AG04450 (cell line): ENCODE measurements at regions of chr19 and their contacts with region 1.

Region 1: DNA sequence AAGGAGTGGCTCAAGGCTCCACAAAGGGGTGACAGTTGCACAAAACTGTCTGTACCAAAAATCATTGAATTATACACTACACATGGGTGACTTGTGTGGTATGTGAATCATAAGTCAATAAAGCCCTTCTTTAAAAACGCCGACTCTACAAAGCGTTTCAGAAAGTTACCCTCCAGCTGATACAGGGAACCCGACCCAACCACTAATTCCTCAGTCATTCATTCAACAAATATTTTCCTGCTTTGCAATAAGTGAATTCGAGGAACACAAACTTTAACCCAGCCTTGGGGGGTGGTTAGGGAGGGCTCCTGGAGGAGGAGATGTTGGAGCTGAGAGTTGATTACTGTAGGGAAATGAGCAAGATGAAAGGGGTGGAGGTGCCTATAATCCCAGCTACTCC is 32.0 kb downstream of the LTBP4 start:
- DNase-seq: peak; percentile 37
- H3K4me3 ChIP-seq: no peak overlapping the region
- H3K27ac ChIP-seq: peak overlapping the region; percentile 65
- H3K27me3 ChIP-seq: no peaks in the 10 kb centered on the region
- CTCF ChIP-seq: no peak

Region 2: GRCh38 chr19:40322871-40323615 is 310.2 kb before region 1 on chr19:
- CTCF ChIA-PET with region 1: no interaction called
- POLR2A ChIA-PET with region 1: no interaction called
- DNase-seq: no peak
- H3K4me3 ChIP-seq: no peak overlapping the region
- H3K27ac ChIP-seq: no peak overlapping the region
- H3K27me3 ChIP-seq: no peaks in the 10 kb centered on the region
- CTCF ChIP-seq: no peak

Region 3: DNA sequence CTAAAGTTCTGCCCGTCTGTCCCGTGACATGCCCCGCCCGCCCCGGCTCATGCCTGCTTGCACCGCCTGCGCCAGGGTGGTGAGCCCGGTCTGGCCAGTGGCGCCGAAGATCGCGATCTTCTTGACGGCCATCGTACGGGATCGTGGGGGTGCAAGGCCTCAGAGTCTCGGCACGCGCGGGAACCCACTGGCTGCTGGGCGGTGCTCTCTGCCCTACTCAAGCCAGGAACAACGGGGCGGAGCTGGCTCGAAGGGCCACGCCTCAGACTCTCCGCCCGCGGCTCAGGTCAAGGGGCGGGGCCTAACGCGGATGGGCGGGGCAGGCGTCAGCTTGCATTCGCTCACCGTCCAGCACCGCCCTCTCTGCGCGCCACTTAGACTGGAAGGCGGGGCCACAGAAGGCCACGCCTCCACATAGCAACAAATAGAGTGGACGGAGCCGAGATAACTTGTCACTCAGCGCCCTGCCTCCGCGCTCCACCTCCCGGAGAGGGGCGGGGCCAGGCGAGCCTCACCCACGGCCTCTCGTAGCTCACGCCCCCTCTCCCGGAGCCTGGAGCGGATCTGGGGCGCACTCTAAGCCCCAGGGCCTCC is 167.6 kb before region 1 on chr19 and contains the start of gene BLVRB:
- CTCF ChIA-PET with region 1: interaction called, 18 read pairs
- POLR2A ChIA-PET with region 1: interaction called, 3 read pairs
- DNase-seq: peak; percentile 99
- H3K4me3 ChIP-seq: peak within 1 kb of the TSS; percentile 74
- H3K27ac ChIP-seq: peak within 1 kb of the TSS; percentile 71
- H3K27me3 ChIP-seq: peaks cover 11% of the 10 kb centered on the region
- CTCF ChIP-seq: no peak
- polyA plus RNA-seq, gene BLVRB: 40.4 and 58.0 TPM in 2 replicates

Region 4: GRCh38 chr19:40570313-40571004 is 62.7 kb before region 1 on chr19:
- CTCF ChIA-PET with region 1: interaction called, 10 read pairs
- POLR2A ChIA-PET with region 1: interaction called, 3 read pairs
- DNase-seq: peak; percentile 100
- H3K4me3 ChIP-seq: peak overlapping the region; percentile 77
- H3K27ac ChIP-seq: peak overlapping the region; percentile 89
- H3K27me3 ChIP-seq: peaks cover 8% of the 10 kb centered on the region
- CTCF ChIP-seq: no peak

Region 5: GRCh38 chr19:40613640-40614303 is 19.4 kb before region 1 on chr19:
- CTCF ChIA-PET with region 1: interaction called, 117 read pairs
- POLR2A ChIA-PET with region 1: interaction called, 10 read pairs
- DNase-seq: peak; percentile 67
- H3K4me3 ChIP-seq: peak overlapping the region; percentile 88
- H3K27ac ChIP-seq: peak overlapping the region; percentile 95
- H3K27me3 ChIP-seq: no peaks in the 10 kb centered on the region
- CTCF ChIP-seq: no peak

Region 6: DNA sequence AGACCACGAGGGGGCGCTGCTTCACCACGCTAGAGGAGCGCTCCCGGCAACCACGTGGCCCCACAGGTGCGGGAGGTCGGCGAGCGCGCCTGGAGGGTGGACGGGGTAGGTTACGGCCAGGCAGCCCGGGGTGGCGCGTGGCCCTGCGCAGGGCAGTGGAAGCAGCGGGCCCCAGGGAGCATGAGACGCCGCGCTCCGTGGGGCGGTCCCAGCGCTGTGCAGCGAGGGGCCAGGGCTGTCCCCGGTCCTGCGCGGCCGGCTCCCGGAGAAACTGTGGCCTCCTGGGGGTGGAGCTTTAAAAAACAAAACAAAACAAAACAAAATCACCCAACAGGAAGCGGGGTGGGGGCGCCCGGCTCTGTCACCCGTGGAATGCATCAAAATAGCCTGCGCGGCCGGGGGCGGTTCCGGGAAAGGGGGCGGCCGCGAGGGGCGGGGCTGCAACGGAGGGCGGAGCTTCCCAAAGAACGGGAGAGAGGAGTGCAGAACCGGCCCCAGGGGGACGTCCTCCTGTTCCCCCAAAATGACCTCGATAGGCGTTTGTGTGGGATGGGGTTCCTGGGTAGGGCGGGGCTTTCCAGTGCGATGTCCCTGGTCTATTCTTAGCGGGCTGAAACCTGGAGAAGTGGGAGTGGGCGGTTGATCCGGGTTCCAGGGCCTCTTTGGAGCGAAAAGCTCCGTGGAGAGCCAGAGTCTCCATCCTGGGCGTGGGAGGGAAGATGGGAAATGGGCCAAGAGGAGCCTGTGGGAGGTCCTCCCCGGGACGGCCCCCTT is 29.9 kb after region 1 on chr19:
- CTCF ChIA-PET with region 1: interaction called, 22 read pairs
- POLR2A ChIA-PET with region 1: no interaction called
- DNase-seq: peak; percentile 79
- H3K4me3 ChIP-seq: peak overlapping the region; percentile 61
- H3K27ac ChIP-seq: peak overlapping the region; percentile 91
- H3K27me3 ChIP-seq: no peaks in the 10 kb centered on the region
- CTCF ChIP-seq: peak; percentile 86

Region 7: GRCh38 chr19:40691421-40692211 is 58.4 kb after region 1 on chr19:
- CTCF ChIA-PET with region 1: no interaction called
- POLR2A ChIA-PET with region 1: no interaction called
- DNase-seq: no peak
- H3K4me3 ChIP-seq: peak overlapping the region; percentile 60; the same call in 1 of the 2 replicates
- H3K27ac ChIP-seq: peak overlapping the region; percentile 96
- H3K27me3 ChIP-seq: no peaks in the 10 kb centered on the region
- CTCF ChIP-seq: no peak

Region 8: DNA sequence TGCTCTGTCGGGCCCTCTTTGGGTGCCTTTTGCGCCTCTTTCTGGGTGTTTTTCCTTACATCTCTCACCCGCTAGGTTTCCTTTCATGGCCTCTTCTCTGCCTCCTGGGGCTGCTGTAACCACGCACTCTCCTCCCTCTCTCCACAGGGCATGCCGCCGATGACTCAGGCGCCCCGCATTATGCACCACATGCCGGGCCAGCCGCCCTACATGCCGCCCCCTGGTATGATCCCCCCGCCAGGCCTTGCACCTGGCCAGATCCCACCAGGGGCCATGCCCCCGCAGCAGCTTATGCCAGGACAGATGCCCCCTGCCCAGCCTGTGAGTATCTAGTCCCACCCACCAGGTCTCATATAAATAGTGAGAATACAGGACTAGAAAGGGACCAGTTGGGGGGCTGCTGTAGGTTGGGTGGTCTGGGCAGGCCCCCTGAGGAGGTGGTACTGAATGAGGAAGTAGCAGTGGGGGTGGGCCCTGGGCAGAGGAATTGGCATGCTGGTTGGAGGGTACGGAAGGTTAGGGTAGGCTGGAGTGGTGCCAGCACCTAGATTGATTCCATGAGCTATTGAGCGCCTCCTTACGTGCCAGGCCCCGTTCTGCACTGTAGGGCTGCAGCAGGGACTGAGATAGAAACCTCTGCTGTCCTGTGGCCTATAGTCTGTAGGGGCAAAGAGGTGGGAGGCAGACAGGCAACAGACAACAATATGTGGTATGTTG is 129.7 kb after region 1 on chr19:
- CTCF ChIA-PET with region 1: no interaction called
- POLR2A ChIA-PET with region 1: no interaction called
- DNase-seq: no peak
- H3K4me3 ChIP-seq: no peak overlapping the region
- H3K27ac ChIP-seq: no peak overlapping the region
- H3K27me3 ChIP-seq: no peaks in the 10 kb centered on the region
- CTCF ChIP-seq: no peak

Region 9: GRCh38 chr19:41031649-41032328 is 398.6 kb after region 1 on chr19:
- CTCF ChIA-PET with region 1: no interaction called
- POLR2A ChIA-PET with region 1: no interaction called
- DNase-seq: no peak
- H3K4me3 ChIP-seq: no peak overlapping the region
- H3K27ac ChIP-seq: no peak overlapping the region
- H3K27me3 ChIP-seq: peaks cover 2% of the 10 kb centered on the region
- CTCF ChIP-seq: no peak